ENCODE measurements at regions of chr2 and their contacts with region 1.

Region 1: GRCh38 chr2:223727562-223727961 is 109.8 kb downstream of the AP1S3 start:
- DNase-seq: peak; percentile 16
- ATAC-seq: peak; percentile 93
- H3K4me3 ChIP-seq: no peak overlapping the region
- H3K27ac ChIP-seq: no peak overlapping the region
- H3K4me1 ChIP-seq: no peaks in the 10 kb centered on the region
- H3K27me3 ChIP-seq: no peaks in the 10 kb centered on the region
- CTCF ChIP-seq: peak; percentile 71 to 73 (median 72)
- EP300 ChIP-seq: no peak
- POLR2A ChIP-seq: no peak
- RAD21 ChIP-seq: peak; percentile 75

Region 2: DNA sequence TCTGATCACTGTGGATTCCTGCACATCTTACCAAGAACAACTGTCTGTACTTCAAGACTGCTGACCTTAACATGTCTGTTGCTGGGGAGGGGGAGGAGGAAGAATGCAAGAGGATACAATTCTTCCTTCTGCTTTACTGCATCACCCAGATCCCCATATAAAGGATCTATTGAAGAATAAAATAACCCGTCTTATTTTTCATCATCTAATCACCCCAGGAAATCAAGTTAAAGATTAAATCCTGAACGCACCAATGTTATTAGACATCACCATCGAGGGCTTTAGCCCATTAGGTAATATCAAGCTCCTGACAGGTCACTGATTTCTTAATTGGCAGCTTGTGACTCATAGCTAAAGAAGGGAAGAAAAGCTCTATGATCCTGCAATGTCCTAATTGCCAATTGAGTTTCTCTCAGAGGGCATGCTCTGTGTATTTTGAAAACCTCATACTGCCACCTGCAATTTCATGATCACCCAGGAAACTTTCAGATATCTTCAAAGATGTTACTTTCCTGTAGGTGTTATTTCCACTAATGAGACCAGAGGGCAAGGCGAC is 751.0 kb before region 1 on chr2:
- CTCF ChIA-PET with region 1: no interaction called
- POLR2A ChIA-PET with region 1: no interaction called
- RAD21 ChIA-PET with region 1: interaction called, 3 read pairs
- SMC1A ChIA-PET with region 1: interaction called, 4 read pairs
- in situ Hi-C with region 1: no loop called
- intact Hi-C with region 1: loop called (anchors 10 kb)
- DNase-seq: no peak
- ATAC-seq: peak; percentile 58
- H3K4me3 ChIP-seq: no peak overlapping the region
- H3K27ac ChIP-seq: no peak overlapping the region
- H3K4me1 ChIP-seq: no peaks in the 10 kb centered on the region
- H3K27me3 ChIP-seq: no peaks in the 10 kb centered on the region
- CTCF ChIP-seq: no peak
- EP300 ChIP-seq: no peak
- POLR2A ChIP-seq: no peak
- RAD21 ChIP-seq: no peak

Region 3: DNA sequence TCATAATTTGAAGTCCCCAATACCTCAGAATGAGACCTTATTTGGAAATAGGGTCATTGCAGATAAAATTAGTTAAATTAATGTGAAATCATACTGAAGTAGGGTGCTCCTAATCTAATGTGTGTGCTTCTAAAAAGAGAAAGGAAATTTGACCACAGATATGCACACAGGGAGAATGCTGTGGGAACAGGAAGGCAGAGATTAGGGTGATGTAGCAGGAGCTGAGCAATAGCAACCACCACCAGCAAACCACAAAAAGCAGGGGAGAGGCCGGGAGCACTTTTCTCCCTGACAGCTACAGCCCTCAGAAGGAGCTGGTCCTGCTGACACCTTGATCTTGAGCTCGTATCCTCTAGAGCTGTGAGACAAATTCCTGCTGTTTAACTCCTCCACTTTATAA is 100.8 kb before region 1 on chr2:
- CTCF ChIA-PET with region 1: no interaction called
- POLR2A ChIA-PET with region 1: no interaction called
- RAD21 ChIA-PET with region 1: no interaction called
- SMC1A ChIA-PET with region 1: no interaction called
- in situ Hi-C with region 1: no loop called
- intact Hi-C with region 1: no loop called
- DNase-seq: no peak
- ATAC-seq: no peak
- H3K4me3 ChIP-seq: no peak overlapping the region
- H3K27ac ChIP-seq: no peak overlapping the region
- H3K4me1 ChIP-seq: no peaks in the 10 kb centered on the region
- H3K27me3 ChIP-seq: no peaks in the 10 kb centered on the region
- CTCF ChIP-seq: no peak
- EP300 ChIP-seq: no peak
- POLR2A ChIP-seq: no peak
- RAD21 ChIP-seq: no peak

Region 4: DNA sequence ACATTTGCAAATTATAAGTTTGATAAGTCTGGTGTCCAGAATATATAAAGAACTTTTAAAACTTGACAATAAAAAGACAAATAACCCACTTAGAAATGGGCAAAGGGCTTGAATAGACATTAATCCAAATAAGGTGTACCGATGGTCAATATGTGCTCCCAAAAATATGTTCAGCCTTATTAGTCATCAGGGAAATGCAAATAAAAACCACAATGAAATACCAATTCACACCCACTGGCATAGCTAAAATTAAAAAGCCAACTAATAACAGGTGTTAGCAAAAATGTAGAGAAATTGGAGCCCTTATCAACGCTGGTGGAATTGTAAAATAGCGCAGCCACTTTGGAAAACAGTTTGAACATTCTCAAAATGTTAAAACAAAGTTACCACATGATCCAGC is 46.4 kb before region 1 on chr2:
- CTCF ChIA-PET with region 1: no interaction called
- POLR2A ChIA-PET with region 1: no interaction called
- RAD21 ChIA-PET with region 1: no interaction called
- SMC1A ChIA-PET with region 1: no interaction called
- in situ Hi-C with region 1: no loop called
- intact Hi-C with region 1: no loop called
- DNase-seq: no peak
- ATAC-seq: no peak
- H3K4me3 ChIP-seq: no peak overlapping the region
- H3K27ac ChIP-seq: no peak overlapping the region
- H3K4me1 ChIP-seq: no peaks in the 10 kb centered on the region
- H3K27me3 ChIP-seq: no peaks in the 10 kb centered on the region
- CTCF ChIP-seq: no peak
- EP300 ChIP-seq: no peak
- POLR2A ChIP-seq: no peak
- RAD21 ChIP-seq: no peak

Region 5: DNA sequence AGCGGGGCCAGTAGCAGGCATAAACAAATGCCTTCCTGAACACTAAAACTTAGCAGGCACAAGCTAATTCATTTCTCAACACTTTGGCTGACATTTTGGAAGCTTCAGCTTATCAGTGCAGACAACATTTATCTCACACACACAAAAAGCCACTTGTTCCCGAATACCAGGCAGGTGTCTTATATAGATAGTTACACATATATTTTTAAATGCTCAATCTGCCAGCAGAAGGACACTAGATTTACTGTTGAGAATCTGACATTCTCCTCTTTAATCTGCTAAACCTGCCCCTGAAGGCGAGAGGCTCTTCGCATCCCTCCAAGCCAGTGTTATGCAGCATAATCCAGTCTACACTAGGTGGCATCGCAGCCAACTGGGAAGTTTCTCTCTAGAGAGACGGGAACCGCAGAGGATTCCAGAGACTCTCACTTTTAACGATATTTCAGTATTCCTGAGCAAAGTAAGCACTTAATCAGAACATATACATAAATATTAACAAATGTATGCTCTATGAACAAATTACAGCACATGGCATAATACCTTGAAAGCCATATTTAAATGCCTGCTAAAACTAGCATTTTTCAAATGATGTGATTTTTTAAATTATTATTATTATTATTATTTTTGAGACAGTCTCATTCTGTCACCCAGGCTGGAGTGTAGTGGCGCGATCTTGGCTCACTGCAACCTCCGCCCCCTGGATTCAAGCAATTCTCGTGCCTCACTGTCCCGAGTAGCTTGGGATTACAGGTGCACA is 35.2 kb before region 1 on chr2:
- CTCF ChIA-PET with region 1: no interaction called
- POLR2A ChIA-PET with region 1: no interaction called
- RAD21 ChIA-PET with region 1: no interaction called
- SMC1A ChIA-PET with region 1: no interaction called
- in situ Hi-C with region 1: no loop called
- intact Hi-C with region 1: no loop called
- DNase-seq: no peak
- ATAC-seq: 0 out of 3 replicates have a peak, but pooled peaks have one; percentile 23
- H3K4me3 ChIP-seq: no peak overlapping the region
- H3K27ac ChIP-seq: no peak overlapping the region
- H3K4me1 ChIP-seq: no peaks in the 10 kb centered on the region
- H3K27me3 ChIP-seq: no peaks in the 10 kb centered on the region
- CTCF ChIP-seq: peak; percentile 25 to 38 (median 28); a peak in 4 of 6 replicates
- EP300 ChIP-seq: no peak
- POLR2A ChIP-seq: no peak
- RAD21 ChIP-seq: peak; percentile 37

Region 6: GRCh38 chr2:223744573-223744972 is 17.0 kb after region 1 on chr2:
- CTCF ChIA-PET with region 1: no interaction called
- POLR2A ChIA-PET with region 1: no interaction called
- RAD21 ChIA-PET with region 1: no interaction called
- SMC1A ChIA-PET with region 1: no interaction called
- in situ Hi-C with region 1: no loop called
- intact Hi-C with region 1: no loop called
- DNase-seq: no peak
- ATAC-seq: no peak
- H3K4me3 ChIP-seq: no peak overlapping the region
- H3K27ac ChIP-seq: no peak overlapping the region
- H3K4me1 ChIP-seq: no peaks in the 10 kb centered on the region
- H3K27me3 ChIP-seq: no peaks in the 10 kb centered on the region
- CTCF ChIP-seq: no peak
- EP300 ChIP-seq: no peak
- POLR2A ChIP-seq: no peak
- RAD21 ChIP-seq: no peak

Region 7: DNA sequence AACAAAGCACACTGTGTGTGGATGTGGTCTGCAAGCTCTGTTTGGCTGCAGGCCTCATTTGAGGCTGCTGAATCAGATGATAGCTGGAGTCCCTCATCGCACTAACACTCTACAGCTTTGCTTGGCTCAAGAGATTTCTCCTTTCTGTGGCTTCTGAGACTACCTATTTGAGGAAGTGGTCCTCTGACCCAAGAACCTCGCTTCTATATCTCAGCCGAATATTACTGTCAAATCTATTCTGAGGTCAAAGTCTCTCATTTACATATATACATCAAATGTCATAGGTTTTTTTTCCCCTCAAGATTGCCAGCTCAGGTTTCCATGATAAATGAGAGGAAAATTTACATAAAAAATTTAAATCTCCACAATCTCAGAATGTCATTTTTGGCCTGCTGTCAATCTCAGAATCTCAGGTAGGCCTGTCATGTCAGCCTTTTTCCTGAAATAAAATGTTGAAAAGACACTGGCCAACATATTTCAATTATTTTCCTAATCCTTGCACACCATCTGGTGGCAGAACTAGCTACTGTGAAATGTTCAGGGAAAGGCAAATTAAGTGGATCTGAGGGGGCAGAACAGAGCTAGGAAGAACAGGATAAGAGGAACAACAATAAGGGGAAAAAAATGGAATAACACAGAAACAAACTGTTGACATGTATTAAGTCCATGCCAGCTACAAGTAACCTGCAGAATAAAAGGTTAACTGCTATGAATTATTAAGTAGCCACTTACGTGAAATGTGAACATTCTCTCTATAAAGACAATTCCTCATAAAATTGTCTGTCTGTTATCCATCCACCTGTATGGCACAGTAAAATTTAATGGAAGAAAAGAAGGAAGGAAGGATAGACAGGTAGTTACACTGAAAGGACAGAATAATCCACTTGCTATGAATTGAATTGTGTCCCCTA is 70.5 kb after region 1 on chr2:
- CTCF ChIA-PET with region 1: interaction called, 18 read pairs
- POLR2A ChIA-PET with region 1: no interaction called
- RAD21 ChIA-PET with region 1: interaction called, 3 read pairs
- SMC1A ChIA-PET with region 1: interaction called, 10 read pairs
- in situ Hi-C with region 1: no loop called
- intact Hi-C with region 1: loop called (anchors 5 kb)
- DNase-seq: peak; percentile 56
- ATAC-seq: peak; percentile 99
- H3K4me3 ChIP-seq: no peak overlapping the region
- H3K27ac ChIP-seq: no peak overlapping the region
- H3K4me1 ChIP-seq: peaks cover 20% of the 10 kb centered on the region
- H3K27me3 ChIP-seq: no peaks in the 10 kb centered on the region
- CTCF ChIP-seq: peak in 2 of 3 experiments; percentile 18 to 55; a peak in 2 of 6 replicates
- EP300 ChIP-seq: peak in 1 of 2 experiments; percentile 52; a peak in 2 of 4 replicates
- POLR2A ChIP-seq: no peak
- RAD21 ChIP-seq: peak; percentile 68

Region 8: DNA sequence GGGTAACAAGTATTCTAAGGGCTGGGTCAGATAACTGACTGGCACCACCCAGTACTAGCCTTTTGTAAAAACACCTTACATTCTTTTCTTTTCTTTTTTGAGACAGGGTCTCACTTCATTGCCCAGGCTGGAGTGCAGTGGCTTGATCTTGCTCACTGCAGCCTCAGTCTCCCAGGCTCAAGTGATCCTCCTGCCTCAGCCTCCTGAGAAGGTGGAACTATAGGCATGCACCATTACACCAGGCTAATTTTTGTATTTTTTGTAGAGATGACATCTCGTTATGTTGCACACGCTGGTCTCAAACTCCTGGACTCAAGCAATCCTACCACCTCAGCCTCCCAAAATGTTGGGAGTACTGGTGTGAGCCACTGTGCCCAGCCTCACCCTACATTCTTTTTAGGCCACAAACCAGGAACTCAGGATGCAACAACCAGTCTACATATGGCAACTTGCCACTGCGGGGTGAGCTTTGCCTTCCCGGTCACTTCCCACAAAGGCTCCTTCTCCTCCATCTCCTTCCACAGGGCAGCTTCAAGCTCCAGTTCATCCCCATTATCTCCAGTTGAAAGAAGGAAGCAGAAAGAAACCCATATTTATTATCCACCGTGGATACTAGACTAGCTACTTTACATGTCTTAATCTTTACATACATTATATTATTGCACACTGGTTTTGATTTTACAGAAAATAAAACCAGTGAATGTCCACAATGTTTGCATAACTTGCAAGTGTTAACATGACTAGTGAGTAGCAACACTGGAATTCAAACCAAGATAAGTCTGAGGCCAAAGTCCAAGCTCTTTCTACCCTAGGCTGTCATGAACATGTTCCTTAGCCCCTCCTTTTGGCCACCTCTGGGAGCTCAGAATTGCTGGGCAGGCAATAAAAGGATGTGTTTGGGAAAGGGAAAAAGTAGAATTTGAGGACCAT is 133.5 kb after region 1 on chr2:
- CTCF ChIA-PET with region 1: interaction called, 24 read pairs
- POLR2A ChIA-PET with region 1: no interaction called
- RAD21 ChIA-PET with region 1: no interaction called
- SMC1A ChIA-PET with region 1: interaction called, 5 read pairs
- in situ Hi-C with region 1: no loop called
- intact Hi-C with region 1: loop called (anchors 1 kb)
- DNase-seq: no peak
- ATAC-seq: peak; percentile 41; the same call in 2 of the 3 replicates
- H3K4me3 ChIP-seq: no peak overlapping the region
- H3K27ac ChIP-seq: no peak overlapping the region
- H3K4me1 ChIP-seq: peaks cover 9% of the 10 kb centered on the region
- H3K27me3 ChIP-seq: no peaks in the 10 kb centered on the region
- CTCF ChIP-seq: 0 out of 6 replicates have a peak, but pooled peaks of 1 of the 3 experiments have one; percentile 7
- EP300 ChIP-seq: no peak
- POLR2A ChIP-seq: no peak
- RAD21 ChIP-seq: no peak

Region 9: GRCh38 chr2:224284134-224284946 is 556.8 kb after region 1 on chr2:
- CTCF ChIA-PET with region 1: no interaction called
- POLR2A ChIA-PET with region 1: no interaction called
- RAD21 ChIA-PET with region 1: interaction called, 3 read pairs
- SMC1A ChIA-PET with region 1: no interaction called
- in situ Hi-C with region 1: no loop called
- intact Hi-C with region 1: loop called (anchors 1 kb)
- DNase-seq: no peak
- ATAC-seq: peak; percentile 52
- H3K4me3 ChIP-seq: no peak overlapping the region
- H3K27ac ChIP-seq: no peak overlapping the region
- H3K4me1 ChIP-seq: no peaks in the 10 kb centered on the region
- H3K27me3 ChIP-seq: no peaks in the 10 kb centered on the region; a peak in 1 of 4 replicates
- CTCF ChIP-seq: peak; percentile 32 to 50 (median 45); a peak in 4 of 6 replicates
- EP300 ChIP-seq: no peak
- POLR2A ChIP-seq: no peak
- RAD21 ChIP-seq: peak; percentile 68